ENCODE measurements at regions of chr20 and their contacts with region 1.

Region 1: GRCh38 chr20:34022154-34022838 is 28.6 kb downstream of the RALY start:
- DNase-seq: peak in 2 of 9 experiments; percentile 28 to 47
- ATAC-seq: peak; percentile 52
- H3K4me3 ChIP-seq: no peak overlapping the region
- H3K4me3 Mint-ChIP-seq: no peak overlapping the region
- H3K27ac ChIP-seq: no peak overlapping the region
- H3K27ac Mint-ChIP-seq: peak overlapping the region; percentile 55
- H3K4me1 ChIP-seq: peaks cover 34% of the 10 kb centered on the region
- H3K4me1 Mint-ChIP-seq: peaks cover 85% of the 10 kb centered on the region
- H3K27me3 ChIP-seq: no peaks in the 10 kb centered on the region
- H3K27me3 Mint-ChIP-seq: no peaks in the 10 kb centered on the region
- CTCF ChIP-seq: peak; percentile 50

Region 2: DNA sequence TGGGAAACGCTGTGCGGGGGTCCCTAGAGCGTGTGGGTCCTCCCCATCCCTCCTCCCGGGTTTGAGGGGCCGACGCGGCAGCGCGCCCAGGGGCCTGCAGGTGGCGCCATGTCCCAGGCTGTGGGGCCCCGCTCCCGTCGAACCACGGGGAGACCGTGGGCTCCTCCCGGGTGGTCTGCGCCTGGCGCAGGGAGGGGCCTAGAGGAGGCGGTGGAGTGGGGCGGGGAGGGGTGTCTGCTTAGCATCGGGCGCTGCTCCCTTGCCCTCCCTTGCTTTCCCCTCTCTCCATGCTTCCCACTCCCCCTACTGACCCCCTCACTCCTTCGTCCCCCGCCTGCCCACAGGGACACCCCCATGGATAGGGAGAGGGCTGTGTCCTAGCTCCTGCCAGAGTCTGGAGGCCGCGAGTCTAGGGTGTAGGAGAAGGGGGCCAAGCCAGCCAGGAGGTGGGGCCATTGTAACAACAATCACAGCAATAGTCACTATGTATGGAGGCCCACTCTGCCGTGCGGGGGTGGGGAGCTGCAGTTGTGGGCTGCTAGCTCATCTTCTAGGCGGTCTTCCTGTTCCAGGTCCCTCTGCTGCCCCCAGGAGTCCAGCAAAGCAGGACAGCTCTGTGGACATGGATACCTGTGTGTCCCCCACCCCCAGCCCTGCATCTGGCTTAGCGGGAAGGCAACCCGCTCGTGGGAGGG is 159.4 kb before region 1 on chr20:
- CTCF ChIA-PET with region 1: interaction called, 3 read pairs
- POLR2A ChIA-PET with region 1: interaction called, 3 read pairs
- intact Hi-C with region 1: loop called in 1 of 2 experiments (anchors 2 kb)
- DNase-seq: peak in 8 of 9 experiments; percentile 25 to 63 (median 54)
- ATAC-seq: peak; percentile 54
- H3K4me3 ChIP-seq: no peak overlapping the region
- H3K4me3 Mint-ChIP-seq: no peak overlapping the region
- H3K27ac ChIP-seq: no peak overlapping the region
- H3K27ac Mint-ChIP-seq: no peak overlapping the region
- H3K4me1 ChIP-seq: peaks cover 28% of the 10 kb centered on the region
- H3K4me1 Mint-ChIP-seq: peaks cover 23% of the 10 kb centered on the region
- H3K27me3 ChIP-seq: no peaks in the 10 kb centered on the region
- H3K27me3 Mint-ChIP-seq: no peaks in the 10 kb centered on the region
- CTCF ChIP-seq: peak; percentile 70

Region 3: DNA sequence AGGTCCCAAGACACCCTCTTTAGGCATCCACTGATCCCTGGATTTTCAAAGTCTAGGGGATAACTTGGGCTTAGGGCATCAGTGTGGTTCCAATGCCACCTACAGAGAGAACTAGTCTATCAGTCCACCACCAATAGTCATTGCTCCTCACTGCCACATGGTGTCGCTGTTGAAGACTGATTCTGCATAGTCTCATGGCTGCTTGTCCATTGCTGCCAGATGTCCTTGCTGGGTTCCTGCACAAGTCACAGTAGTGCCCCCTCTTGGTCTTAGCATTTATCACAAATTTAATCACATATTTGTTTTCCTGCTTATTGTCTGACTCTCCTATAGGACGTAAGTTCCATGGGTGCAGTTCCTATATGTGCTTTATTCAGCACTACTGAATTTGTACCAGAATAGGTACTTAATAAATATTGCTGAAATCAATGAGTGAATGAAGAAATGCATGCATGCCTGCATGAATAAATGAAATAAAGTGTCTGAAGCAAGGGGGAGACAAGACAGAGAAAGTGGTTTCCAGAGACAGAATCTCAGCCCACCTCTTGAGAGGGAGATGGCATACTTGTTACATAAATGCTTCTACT is 74.5 kb before region 1 on chr20:
- CTCF ChIA-PET with region 1: no interaction called
- POLR2A ChIA-PET with region 1: no interaction called
- intact Hi-C with region 1: loop called in 1 of 2 experiments (anchors 5 kb)
- DNase-seq: peak in 6 of 9 experiments; percentile 1 to 67 (median 40)
- ATAC-seq: peak; percentile 61
- H3K4me3 ChIP-seq: no peak overlapping the region
- H3K4me3 Mint-ChIP-seq: no peak overlapping the region
- H3K27ac ChIP-seq: no peak overlapping the region
- H3K27ac Mint-ChIP-seq: no peak overlapping the region
- H3K4me1 ChIP-seq: no peaks in the 10 kb centered on the region
- H3K4me1 Mint-ChIP-seq: no peaks in the 10 kb centered on the region
- H3K27me3 ChIP-seq: no peaks in the 10 kb centered on the region
- H3K27me3 Mint-ChIP-seq: peaks cover 8% of the 10 kb centered on the region
- CTCF ChIP-seq: peak; percentile 67

Region 4: DNA sequence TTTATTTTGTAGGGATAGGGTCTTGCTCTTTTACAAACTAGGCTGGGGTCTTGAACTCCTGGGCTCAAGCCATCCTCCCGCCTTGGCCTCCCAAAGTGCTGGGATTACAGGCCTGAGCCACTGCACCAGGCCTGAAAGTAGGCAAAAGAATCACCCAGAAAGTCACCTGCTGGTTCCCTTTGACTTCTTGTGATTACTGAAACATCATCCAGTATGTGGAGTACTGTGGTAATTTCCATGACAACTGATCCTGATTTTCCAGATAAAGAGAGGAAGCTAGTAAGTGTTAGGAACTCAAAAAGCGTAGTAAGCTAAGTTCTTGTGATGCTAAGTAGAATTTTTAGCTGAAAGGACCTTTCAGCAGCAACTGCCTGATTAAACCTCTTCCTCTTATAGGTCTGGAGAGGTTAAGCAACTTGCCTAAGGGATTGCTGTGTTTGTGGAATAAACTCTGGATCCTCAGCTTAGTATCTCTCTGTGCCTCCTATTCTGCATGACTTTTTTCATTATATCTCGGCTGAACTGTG is 11.8 kb before region 1 on chr20:
- CTCF ChIA-PET with region 1: interaction called, 16 read pairs
- POLR2A ChIA-PET with region 1: no interaction called
- intact Hi-C with region 1: no loop called
- DNase-seq: no peak
- ATAC-seq: no peak
- H3K4me3 ChIP-seq: no peak overlapping the region
- H3K4me3 Mint-ChIP-seq: peak overlapping the region; percentile 17
- H3K27ac ChIP-seq: peak overlapping the region in 1 of 2 experiments; percentile 60
- H3K27ac Mint-ChIP-seq: no peak overlapping the region
- H3K4me1 ChIP-seq: peaks cover 77% of the 10 kb centered on the region
- H3K4me1 Mint-ChIP-seq: peaks cover 90% of the 10 kb centered on the region
- H3K27me3 ChIP-seq: no peaks in the 10 kb centered on the region
- H3K27me3 Mint-ChIP-seq: no peaks in the 10 kb centered on the region
- CTCF ChIP-seq: no peak

Measured in CD8-positive, alpha-beta T cell (primary cell).